Psoas muscle (tissue), 8 donors: ENCODE measurements at regions of chr2 and their contacts with region 1.

Region 1: DNA sequence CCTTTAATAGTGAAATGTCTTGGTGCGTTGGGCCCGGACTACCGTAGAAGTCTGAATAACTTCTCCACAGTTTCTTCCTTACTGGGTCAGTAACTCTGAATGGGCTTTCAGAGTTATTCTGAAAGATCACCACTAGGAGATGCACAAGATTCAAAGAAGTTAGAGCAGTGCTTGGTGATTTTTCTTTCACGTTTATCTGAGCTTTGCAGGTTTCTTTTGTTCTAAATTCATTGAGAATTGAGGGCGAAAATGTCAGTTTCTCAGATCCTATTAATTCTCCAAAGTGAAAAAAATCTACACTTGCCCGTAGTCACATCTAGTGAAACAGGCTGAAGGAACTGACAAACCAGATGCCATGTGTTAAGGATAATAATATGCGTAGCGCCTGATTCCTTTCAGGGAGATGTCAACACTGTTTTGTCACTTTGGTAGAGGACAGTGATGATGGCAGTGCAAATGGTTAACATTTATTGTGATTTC is 70.1 kb downstream of the QPCT start:
- DNase-seq: no peak
- ATAC-seq: peak; percentile 76 to 96 (median 83)
- H3K4me3 ChIP-seq: no peak overlapping the region
- H3K27ac ChIP-seq: peak overlapping the region; percentile 38
- H3K4me1 ChIP-seq: peaks cover 9% of the 10 kb centered on the region
- H3K27me3 ChIP-seq: no peaks in the 10 kb centered on the region
- CTCF ChIP-seq: peak; percentile 88

Region 2: GRCh38 chr2:37549598-37549997 is 135.1 kb after region 1 on chr2:
- intact Hi-C with region 1: loop called in 1 of 2 experiments (anchors 10 kb)
- DNase-seq: no peak
- ATAC-seq: no peak
- H3K4me3 ChIP-seq: no peak overlapping the region
- H3K27ac ChIP-seq: no peak overlapping the region
- H3K4me1 ChIP-seq: no peaks in the 10 kb centered on the region
- H3K27me3 ChIP-seq: no peaks in the 10 kb centered on the region
- CTCF ChIP-seq: no peak

Region 3: GRCh38 chr2:37672104-37672869 is 257.8 kb after region 1 on chr2:
- intact Hi-C with region 1: loop called (anchors 5 to 10 kb)
- DNase-seq: peak; percentile 78 to 89
- ATAC-seq: peak; percentile 77 to 88 (median 82)
- H3K4me3 ChIP-seq: peak overlapping the region; percentile 98
- H3K27ac ChIP-seq: peak overlapping the region; percentile 100
- H3K4me1 ChIP-seq: peaks cover 23% of the 10 kb centered on the region
- H3K27me3 ChIP-seq: no peaks in the 10 kb centered on the region
- CTCF ChIP-seq: no peak

Region 4: GRCh38 chr2:37832590-37833197 is 418.2 kb after region 1 on chr2:
- intact Hi-C with region 1: loop called (anchors 1 kb)
- DNase-seq: peak; percentile 85 to 92
- ATAC-seq: peak; percentile 70 to 91 (median 74)
- H3K4me3 ChIP-seq: no peak overlapping the region
- H3K27ac ChIP-seq: no peak overlapping the region
- H3K4me1 ChIP-seq: peaks cover 23% of the 10 kb centered on the region
- H3K27me3 ChIP-seq: no peaks in the 10 kb centered on the region
- CTCF ChIP-seq: peak; percentile 85